CD8-positive, alpha-beta T cell (primary cell): ENCODE measurements at regions of chr6 and their contacts with region 1.

Region 1: DNA sequence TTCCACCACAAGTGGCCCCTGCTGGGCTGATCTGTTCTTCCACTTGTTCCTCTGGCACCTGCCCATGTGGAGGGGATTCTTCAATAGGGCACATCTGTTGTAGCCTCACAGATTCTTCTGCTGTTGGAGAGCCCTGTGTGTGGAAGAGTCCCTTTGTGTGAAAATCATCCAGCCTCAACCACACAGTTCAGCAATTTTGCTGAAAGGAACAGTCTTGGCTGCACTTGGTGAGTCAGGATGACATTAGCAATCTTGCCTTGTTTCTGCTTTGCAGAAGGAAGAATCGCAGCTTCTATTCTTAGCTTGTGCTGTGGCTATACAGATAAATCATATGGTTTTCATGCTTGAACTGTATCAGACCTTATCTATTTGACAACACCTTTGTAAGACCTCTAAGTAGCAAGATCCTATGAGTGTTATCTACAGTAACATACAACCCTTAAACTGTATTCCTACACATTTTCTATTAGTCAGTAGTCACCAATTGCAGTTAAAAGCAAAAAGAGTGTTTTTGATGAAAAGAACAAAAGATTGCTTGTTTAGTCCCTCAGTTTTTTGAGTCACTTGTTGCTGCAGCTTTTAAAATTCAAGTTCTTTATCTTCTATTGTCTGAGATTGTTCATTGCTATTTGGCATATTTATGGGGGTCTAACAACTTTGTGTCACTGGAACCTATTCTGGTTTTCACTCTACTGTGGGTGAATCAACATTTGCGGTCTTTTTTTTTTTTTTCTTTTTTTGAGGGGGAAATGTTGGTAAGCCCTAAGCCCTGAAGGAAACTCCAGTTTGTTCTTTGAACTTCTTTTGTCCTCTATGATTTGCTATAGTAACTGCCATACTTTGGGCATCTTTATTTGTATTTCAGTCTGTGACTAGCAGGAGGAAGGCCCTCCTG is 231.6 kb downstream of the TFAP2B start:
- DNase-seq: no peak
- ATAC-seq: no peak
- H3K4me3 ChIP-seq: no peak overlapping the region
- H3K4me3 Mint-ChIP-seq: no peak overlapping the region
- H3K27ac ChIP-seq: no peak overlapping the region
- H3K27ac Mint-ChIP-seq: no peak overlapping the region
- H3K4me1 ChIP-seq: no peaks in the 10 kb centered on the region
- H3K4me1 Mint-ChIP-seq: no peaks in the 10 kb centered on the region
- H3K27me3 ChIP-seq: no peaks in the 10 kb centered on the region
- H3K27me3 Mint-ChIP-seq: no peaks in the 10 kb centered on the region
- CTCF ChIP-seq: no peak

Region 2: GRCh38 chr6:50905297-50905696 is 144.9 kb before region 1 on chr6:
- CTCF ChIA-PET with region 1: no interaction called
- POLR2A ChIA-PET with region 1: no interaction called
- intact Hi-C with region 1: loop called in 1 of 2 experiments (anchors 10 kb)
- DNase-seq: no peak
- ATAC-seq: no peak
- H3K4me3 ChIP-seq: no peak overlapping the region
- H3K4me3 Mint-ChIP-seq: no peak overlapping the region
- H3K27ac ChIP-seq: no peak overlapping the region
- H3K27ac Mint-ChIP-seq: no peak overlapping the region
- H3K4me1 ChIP-seq: no peaks in the 10 kb centered on the region
- H3K4me1 Mint-ChIP-seq: no peaks in the 10 kb centered on the region
- H3K27me3 ChIP-seq: no peaks in the 10 kb centered on the region
- H3K27me3 Mint-ChIP-seq: no peaks in the 10 kb centered on the region
- CTCF ChIP-seq: no peak